Activated CD8-positive, alpha-beta T cell treated with anti-CD3 and anti-CD28 coated beads for 36 hours (primary cell): ENCODE measurements at regions of chr14 and their contacts with region 1.

Region 1: DNA sequence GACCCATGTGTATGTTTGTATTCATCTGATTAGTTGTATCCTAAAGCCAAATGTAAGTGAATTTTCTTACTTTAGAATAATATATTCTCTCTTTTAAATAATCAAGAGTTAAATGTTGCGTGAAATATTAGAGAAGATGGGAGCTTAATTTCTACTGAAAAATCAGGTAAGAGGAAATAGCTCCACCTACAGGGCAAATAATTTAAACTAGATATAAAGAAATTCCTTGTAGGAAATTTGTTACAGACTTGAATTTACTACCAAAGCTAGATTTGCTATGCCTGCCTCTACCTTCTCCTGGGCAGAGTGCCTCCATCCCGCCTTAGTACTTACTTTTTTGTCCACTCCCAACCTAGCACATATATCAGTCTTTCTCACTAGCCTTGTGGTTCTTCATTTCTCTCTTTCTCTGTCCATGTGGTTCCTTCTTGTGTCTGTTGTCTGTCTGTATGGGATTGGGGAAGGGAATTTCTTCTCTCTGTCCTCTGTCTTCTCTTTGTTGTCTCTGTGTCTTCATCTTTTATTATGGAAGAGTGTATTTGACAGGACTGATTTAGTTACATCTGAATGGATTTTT is 44.7 kb downstream of the PALS1 start:
- DNase-seq: no peak
- ATAC-seq: no peak
- H3K4me3 Mint-ChIP-seq: no peak overlapping the region
- H3K27ac Mint-ChIP-seq: no peak overlapping the region
- H3K4me1 Mint-ChIP-seq: no peaks in the 10 kb centered on the region
- H3K27me3 Mint-ChIP-seq: no peaks in the 10 kb centered on the region
- CTCF ChIP-seq: peak; percentile 82

Region 2: GRCh38 chr14:67158566-67158965 is 127.4 kb before region 1 on chr14:
- CTCF ChIA-PET with region 1: interaction called, 61 read pairs
- POLR2A ChIA-PET with region 1: no interaction called
- intact Hi-C with region 1: no loop called
- DNase-seq: no peak
- ATAC-seq: peak; percentile 66
- H3K4me3 Mint-ChIP-seq: no peak overlapping the region
- H3K27ac Mint-ChIP-seq: no peak overlapping the region
- H3K4me1 Mint-ChIP-seq: peaks cover 13% of the 10 kb centered on the region
- H3K27me3 Mint-ChIP-seq: no peaks in the 10 kb centered on the region
- CTCF ChIP-seq: no peak

Region 3: GRCh38 chr14:67166450-67166853 is 119.5 kb before region 1 on chr14:
- CTCF ChIA-PET with region 1: interaction called, 61 read pairs
- POLR2A ChIA-PET with region 1: no interaction called
- intact Hi-C with region 1: loop called (anchors 2 kb)
- DNase-seq: peak; percentile 63
- ATAC-seq: no peak
- H3K4me3 Mint-ChIP-seq: no peak overlapping the region
- H3K27ac Mint-ChIP-seq: no peak overlapping the region
- H3K4me1 Mint-ChIP-seq: no peaks in the 10 kb centered on the region
- H3K27me3 Mint-ChIP-seq: no peaks in the 10 kb centered on the region
- CTCF ChIP-seq: peak; percentile 77

Region 4: GRCh38 chr14:67359775-67360648 is 74.0 kb after region 1 on chr14 and contains the starts of genes ATP6V1D and EIF2S1:
- CTCF ChIA-PET with region 1: interaction called, 10 read pairs
- POLR2A ChIA-PET with region 1: no interaction called
- intact Hi-C with region 1: no loop called
- DNase-seq: peak; percentile 99
- ATAC-seq: peak; percentile 96
- H3K4me3 Mint-ChIP-seq: peak within 1 kb of the TSS; percentile 97
- H3K27ac Mint-ChIP-seq: peak within 1 kb of the TSS; percentile 93
- H3K4me1 Mint-ChIP-seq: peaks cover 60% of the 10 kb centered on the region
- H3K27me3 Mint-ChIP-seq: no peaks in the 10 kb centered on the region
- CTCF ChIP-seq: peak; percentile 99
- total RNA-seq, gene ATP6V1D: 18.8 to 20.7 TPM
- total RNA-seq, gene EIF2S1: 210 to 219 TPM